ENCODE measurements at regions of chr17 and their contacts with region 1.

Region 1: DNA sequence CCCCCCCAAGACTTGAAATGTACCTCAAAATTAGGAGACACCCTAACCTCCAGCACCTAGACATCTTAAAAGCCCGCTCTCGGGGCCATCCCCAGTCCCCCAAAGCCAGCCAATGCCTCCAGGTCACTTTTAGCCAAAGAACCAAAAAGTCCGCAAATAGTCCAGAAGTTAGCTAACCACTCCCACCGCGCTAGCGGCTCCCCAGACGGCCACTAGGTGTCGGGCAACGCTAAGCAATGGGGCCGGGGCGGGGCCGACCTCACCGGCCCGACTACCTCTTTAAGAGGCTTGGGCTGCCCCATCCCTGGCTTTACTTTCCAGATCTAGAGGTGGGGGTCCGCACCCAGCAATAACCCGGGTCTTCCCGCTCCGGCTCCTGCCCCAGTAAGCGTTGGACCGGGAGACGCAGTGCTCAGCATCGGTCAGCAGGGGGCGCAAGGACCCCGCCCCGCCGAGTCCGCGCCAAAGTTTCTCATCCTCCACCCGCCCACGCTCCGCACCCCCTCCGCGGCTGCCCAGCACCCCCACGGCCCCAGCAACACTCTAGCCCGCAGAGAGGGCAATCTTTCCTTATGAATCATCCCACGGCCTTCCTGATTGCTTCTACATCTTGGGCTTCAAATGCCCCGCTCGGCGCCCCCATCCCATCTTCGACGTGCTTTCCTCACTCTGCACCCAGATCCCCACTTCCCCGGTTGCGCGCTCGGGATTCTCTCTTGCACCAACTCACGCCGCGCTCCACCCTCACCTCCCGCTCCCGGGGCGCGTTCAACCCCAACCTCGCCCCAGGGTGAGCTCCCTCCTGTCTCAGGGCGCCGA is 765 bp downstream of the COL1A1 start:
- DNase-seq: peak; percentile 68
- H3K4me3 ChIP-seq: peak overlapping the region in 2 of 3 experiments; percentile 13 to 18
- H3K27ac ChIP-seq: no peak overlapping the region
- H3K4me1 ChIP-seq: no peaks in the 10 kb centered on the region
- H3K27me3 ChIP-seq: peaks cover 13 to 24% of the 10 kb centered on the region in 2 experiments
- CTCF ChIP-seq: peak; percentile 95 to 100
- POLR2A ChIP-seq: no peak

Region 2: DNA sequence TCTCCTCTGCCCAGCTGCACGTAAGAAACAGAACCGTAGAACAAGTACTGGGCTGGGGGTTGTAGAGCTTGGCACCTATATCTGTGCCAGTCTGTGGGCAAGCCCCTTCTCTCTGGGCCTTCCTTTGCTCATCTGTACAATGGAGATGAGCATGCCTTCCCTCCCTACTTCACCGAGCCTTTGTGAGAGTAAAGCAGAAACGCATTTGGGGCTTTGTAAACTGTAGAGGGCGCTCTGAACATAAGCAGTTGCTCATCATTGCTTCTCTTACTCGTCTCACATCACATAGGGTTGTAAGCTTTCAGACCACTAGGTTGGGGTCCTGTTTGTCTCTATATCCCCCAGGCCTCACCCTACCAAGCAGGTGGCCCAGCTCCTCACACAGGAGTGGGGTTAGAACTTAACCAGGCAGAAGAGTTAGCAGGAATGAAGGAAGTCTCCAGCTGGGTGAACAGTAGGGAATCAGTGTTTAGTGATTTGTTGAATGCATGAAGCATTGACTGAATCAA is 85.8 kb before region 1 on chr17:
- CTCF ChIA-PET with region 1: interaction called, 20 read pairs
- POLR2A ChIA-PET with region 1: interaction called, 3 read pairs
- dilution Hi-C with region 1: no loop called
- intact Hi-C with region 1: loop called (anchors 1 kb)
- DNase-seq: peak; percentile 68
- H3K4me3 ChIP-seq: no peak overlapping the region
- H3K27ac ChIP-seq: no peak overlapping the region
- H3K4me1 ChIP-seq: no peaks in the 10 kb centered on the region
- H3K27me3 ChIP-seq: no peaks in the 10 kb centered on the region
- CTCF ChIP-seq: peak; percentile 74 to 81
- POLR2A ChIP-seq: no peak

Region 3: GRCh38 chr17:50169121-50169764 is 31.4 kb before region 1 on chr17:
- CTCF ChIA-PET with region 1: interaction called, 234 read pairs
- POLR2A ChIA-PET with region 1: no interaction called
- dilution Hi-C with region 1: no loop called
- intact Hi-C with region 1: loop called (anchors 1 kb)
- DNase-seq: peak; percentile 65
- H3K4me3 ChIP-seq: no peak overlapping the region
- H3K27ac ChIP-seq: no peak overlapping the region
- H3K4me1 ChIP-seq: peaks cover 5% of the 10 kb centered on the region
- H3K27me3 ChIP-seq: no peaks in the 10 kb centered on the region
- CTCF ChIP-seq: peak; percentile 78 to 88
- POLR2A ChIP-seq: no peak

Region 4: DNA sequence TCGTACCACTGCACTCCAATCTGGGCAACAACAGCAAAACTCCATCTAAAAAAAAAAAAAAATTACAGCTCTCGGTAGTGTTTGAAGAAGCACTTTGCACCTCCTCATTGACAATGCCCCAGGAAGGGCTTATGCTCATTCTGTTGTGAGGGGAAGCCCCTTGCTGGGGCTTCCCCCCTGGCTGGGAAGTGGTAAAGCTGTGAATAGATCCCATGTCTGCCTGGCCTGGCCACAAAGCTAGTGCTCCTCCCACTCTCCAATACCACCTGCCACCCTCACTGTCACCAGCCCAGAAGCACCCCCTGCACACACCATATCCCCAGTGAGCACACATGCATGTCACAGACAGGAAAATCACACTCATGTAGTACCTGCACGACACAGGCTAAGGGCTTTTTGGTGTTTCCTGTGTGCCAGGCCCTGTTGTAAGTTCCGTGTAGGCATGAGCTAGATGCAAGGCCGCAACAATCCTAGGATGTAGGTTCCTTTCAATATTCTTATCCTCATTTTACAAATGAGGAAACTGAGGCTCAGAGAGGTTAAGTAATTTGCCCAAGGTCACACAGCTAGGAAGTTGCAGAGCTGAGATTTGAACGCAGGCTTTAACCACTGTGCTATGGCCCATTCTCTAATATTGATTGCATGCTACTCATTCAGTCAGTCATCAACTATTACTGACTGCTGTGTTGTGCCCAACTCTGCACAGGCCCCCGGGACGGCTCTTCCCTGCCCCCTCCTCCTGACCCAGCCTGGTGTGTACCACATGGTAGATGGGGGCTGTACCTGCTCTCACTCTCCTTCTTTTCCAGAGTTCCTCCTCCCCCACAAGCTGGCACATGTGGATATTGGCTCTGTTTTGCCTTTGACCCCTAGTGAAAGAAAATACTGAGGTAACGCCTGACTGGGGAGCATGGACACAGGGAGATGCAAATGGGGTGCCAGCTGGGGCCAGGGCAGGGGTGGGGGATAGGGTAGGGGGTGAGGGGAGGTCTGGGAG is 12.7 kb after region 1 on chr17:
- CTCF ChIA-PET with region 1: interaction called, 80 read pairs
- POLR2A ChIA-PET with region 1: no interaction called
- dilution Hi-C with region 1: no loop called
- intact Hi-C with region 1: no loop called
- DNase-seq: no peak
- H3K4me3 ChIP-seq: no peak overlapping the region
- H3K27ac ChIP-seq: no peak overlapping the region
- H3K4me1 ChIP-seq: peaks cover 7% of the 10 kb centered on the region
- H3K27me3 ChIP-seq: peaks cover 17 to 18% of the 10 kb centered on the region in 2 experiments
- CTCF ChIP-seq: no peak
- POLR2A ChIP-seq: no peak

Region 5: DNA sequence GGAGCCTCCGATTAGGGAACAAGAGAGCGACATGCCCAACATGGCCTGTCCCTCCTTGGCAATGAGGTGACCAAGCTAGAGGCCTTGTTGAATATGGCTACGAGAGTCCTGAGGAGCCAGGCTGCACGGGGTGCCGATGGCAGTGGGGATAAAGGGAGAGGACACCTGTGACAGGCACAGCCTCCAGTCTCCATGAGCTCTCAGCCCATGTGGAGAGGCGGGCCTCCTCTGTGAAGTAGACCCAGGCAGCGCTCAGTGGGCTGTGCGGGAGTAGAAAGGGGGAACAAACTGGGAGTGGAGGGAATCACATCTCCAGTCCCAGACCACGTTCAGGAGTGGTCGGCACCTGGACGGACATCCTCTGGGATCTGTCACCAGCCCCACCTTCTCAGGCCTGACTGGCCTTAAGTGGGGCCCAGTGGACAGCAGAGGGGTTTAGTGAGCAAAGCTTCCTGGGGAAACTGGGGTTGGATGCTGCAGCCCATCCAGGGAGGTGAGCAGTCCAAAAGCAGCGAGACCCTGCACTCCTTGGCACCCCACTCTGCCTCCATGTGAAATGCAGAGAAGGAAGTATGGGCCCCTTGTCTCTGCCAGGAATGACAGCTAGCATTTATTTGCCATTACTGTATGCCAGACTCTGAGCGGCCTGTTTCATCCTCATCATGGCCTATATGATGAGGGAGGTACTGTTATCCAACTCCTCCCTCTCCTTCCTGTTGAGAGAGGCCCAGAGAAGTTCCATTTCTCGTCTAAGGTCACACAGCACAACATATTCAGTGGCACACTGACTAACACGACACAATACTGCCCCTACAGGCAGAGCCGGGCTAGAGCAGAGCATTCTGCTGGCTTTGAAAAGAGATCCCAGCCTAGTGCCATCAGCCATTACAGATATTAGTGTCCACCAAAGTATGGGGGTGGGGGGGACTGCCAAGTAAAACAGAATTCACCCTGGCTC is 69.1 kb after region 1 on chr17:
- CTCF ChIA-PET with region 1: interaction called, 236 read pairs
- POLR2A ChIA-PET with region 1: no interaction called
- dilution Hi-C with region 1: no loop called
- intact Hi-C with region 1: loop called (anchors 1 kb)
- DNase-seq: peak; percentile 51
- H3K4me3 ChIP-seq: no peak overlapping the region
- H3K27ac ChIP-seq: no peak overlapping the region
- H3K4me1 ChIP-seq: peaks cover 9% of the 10 kb centered on the region
- H3K27me3 ChIP-seq: peaks cover 3 to 6% of the 10 kb centered on the region in 2 experiments
- CTCF ChIP-seq: peak; percentile 83 to 84
- POLR2A ChIP-seq: no peak

Region 6: DNA sequence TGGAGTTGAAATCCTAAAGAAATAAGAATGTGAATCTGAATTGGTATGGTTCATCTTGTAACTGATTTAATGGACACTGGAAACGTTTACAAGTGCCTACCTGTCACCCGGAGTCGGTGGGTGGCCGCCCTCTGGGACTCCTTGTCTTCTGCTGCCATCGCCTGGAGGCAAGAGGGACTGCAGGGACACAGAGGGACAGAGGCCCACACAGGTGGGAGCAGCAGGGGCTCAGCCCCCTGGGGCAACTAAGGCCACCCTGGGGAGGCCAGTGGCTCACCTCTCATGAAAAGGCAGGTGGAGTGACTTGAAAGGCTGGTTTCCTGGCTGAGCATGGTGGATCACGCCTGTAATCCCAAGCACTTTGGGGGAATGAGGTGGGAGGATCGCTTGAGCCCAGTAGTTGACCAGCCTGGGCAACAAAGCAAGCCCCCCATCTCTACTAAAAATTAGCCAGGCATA is 96.8 kb after region 1 on chr17:
- CTCF ChIA-PET with region 1: interaction called, 390 read pairs
- POLR2A ChIA-PET with region 1: no interaction called
- dilution Hi-C with region 1: no loop called
- intact Hi-C with region 1: loop called (anchors 1 kb)
- DNase-seq: peak; percentile 56
- H3K4me3 ChIP-seq: no peak overlapping the region
- H3K27ac ChIP-seq: no peak overlapping the region
- H3K4me1 ChIP-seq: no peaks in the 10 kb centered on the region
- H3K27me3 ChIP-seq: no peaks in the 10 kb centered on the region
- CTCF ChIP-seq: peak; percentile 88 to 91
- POLR2A ChIP-seq: no peak

Region 7: DNA sequence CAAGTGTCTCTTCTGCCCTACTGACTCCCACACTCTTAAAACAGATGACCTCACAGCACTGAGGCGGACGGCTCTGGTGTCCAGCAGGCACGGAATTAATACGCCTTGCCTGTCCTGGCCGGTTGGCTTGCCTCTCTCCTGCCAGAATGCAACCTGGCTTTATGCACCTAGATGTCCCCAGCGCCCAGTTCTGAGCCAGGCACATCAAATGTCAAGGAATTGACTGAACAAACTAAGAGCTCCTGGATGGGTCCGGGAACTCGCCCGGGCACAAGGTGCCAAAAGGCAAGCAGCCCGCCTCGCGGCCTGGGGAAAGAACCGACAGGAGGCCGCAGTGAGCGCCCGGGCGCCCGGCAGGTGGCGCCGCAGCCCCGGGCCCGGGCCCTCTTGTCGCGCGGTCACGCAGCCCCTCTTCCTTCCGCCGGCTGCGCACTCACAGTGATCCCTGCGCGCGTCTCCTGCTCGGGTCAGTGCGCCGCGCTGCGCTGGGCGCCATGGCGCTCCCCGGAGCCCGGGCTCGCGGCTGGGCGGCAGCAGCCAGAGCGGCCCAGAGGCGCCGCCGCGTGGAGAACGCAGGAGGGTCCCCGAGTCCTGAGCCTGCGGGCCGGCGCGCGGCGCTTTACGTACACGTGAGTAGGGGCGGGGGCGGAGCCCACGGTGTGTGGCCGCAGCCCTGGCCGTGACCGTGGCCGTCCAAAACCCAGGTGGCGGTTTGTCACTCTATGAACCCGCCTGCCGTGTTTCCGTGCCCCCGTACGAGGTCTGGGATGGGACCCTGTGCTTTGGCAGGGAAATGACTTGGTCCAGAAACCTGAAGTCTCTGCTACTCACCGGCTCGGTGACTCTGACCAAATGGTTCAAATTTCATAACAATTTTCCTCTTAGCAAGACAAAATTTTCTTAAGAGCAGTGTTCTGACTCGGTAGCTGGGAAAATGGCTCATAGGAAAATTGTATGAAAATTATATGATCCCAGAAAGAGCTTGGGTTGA is 278.0 kb after region 1 on chr17 and contains the start of gene RSAD1:
- CTCF ChIA-PET with region 1: interaction called, 11 read pairs
- POLR2A ChIA-PET with region 1: no interaction called
- dilution Hi-C with region 1: no loop called
- intact Hi-C with region 1: loop called (anchors 1 kb)
- DNase-seq: peak; percentile 88
- H3K4me3 ChIP-seq: peak within 1 kb of the TSS; percentile 58 to 85 (median 79)
- H3K27ac ChIP-seq: peak within 1 kb of the TSS; percentile 39
- H3K4me1 ChIP-seq: peaks cover 20% of the 10 kb centered on the region
- H3K27me3 ChIP-seq: peaks cover 7 to 17% of the 10 kb centered on the region in 2 experiments
- CTCF ChIP-seq: peak; percentile 77 to 88
- POLR2A ChIP-seq: peak; percentile 94
- total RNA-seq, gene RSAD1: 33.1 and 35.5 TPM in 2 replicates